B cell (primary cell): ENCODE measurements at regions of chr14 and their contacts with region 1.

Region 1: DNA sequence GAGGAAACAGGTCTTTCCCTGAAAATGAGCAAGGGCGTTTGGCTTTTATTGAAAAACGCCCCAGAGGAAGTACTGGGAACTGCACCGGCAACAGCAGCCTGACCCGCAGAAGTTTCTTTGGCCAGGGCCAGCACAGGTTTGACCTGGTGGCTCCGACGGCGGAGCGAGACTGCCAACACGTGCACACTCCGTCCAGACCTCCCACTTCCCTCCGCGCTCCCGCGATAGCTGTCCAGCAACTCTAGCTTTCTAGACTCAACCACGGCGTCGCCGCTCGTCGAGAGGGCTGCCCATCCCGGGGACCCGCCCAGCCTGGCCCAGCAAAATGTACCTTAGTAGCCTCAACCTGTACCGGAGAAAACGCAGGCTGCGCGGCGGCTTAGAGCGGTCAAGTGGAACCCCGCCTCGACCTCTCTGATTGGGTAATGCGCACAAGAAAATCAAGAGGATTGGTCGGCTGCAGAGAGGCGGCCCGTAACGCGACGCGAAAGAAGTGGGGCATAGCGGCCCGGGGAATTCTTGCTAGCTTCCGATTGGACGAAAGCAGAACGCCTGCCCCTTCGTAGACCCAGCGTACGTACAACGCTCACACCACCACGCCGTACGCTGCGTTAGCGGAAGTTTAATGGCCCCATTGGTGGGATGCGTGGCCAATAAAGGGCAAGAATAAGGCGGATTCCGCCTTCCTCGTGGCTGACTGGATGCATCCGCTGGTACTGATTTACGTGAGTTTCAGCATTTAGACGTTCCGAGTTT is at the start of gene WDR89:
- DNase-seq: peak; percentile 99
- ATAC-seq: peak; percentile 83
- H3K4me3 ChIP-seq: peak within 1 kb of the TSS; percentile 81 to 98 (median 86)
- H3K4me3 Mint-ChIP-seq: peak within 1 kb of the TSS; percentile 85
- H3K27ac ChIP-seq: peak within 1 kb of the TSS; percentile 97 to 99
- H3K27ac Mint-ChIP-seq: peak within 1 kb of the TSS; percentile 89
- H3K4me1 ChIP-seq: peaks cover 18% of the 10 kb centered on the region in 2 donors
- H3K4me1 Mint-ChIP-seq: peaks cover 34% of the 10 kb centered on the region
- H3K27me3 ChIP-seq: no peaks in the 10 kb centered on the region
- H3K27me3 Mint-ChIP-seq: no peaks in the 10 kb centered on the region
- CTCF ChIP-seq: peak; percentile 88
- total RNA-seq, gene WDR89: 19.0 and 21.8 TPM in 2 replicates

Region 2: DNA sequence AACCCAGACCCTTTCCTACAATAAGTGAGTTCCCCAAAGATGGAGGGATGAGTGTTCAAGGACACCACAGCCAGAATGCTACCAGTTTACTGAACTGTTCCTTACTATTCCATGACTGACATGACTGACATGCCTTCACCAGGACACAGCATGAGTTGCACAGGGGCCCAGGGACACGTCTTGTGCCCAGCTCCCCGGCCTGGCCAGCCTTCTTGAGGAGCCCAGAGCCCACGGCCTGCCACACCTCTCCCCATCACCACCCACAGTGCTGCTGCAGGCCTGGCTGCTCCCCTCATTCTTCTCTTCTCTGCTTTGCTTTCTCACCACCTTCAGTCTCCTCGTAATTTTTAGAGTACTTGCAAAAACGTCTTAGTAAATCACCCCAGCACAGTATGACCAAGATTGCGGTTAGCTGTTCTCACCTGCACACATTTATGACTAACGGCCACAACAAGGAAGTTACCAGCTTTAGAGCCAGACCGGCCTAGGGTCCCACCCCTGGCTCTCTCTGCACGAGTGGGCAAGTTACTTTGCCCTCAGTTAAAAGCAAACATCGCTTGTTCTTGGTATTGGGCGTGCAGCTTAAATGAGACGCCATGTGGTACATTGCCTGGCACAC is 117.0 kb before region 1 on chr14:
- CTCF ChIA-PET with region 1: no interaction called
- POLR2A ChIA-PET with region 1: no interaction called
- intact Hi-C with region 1: no loop called
- DNase-seq: peak; percentile 50
- ATAC-seq: peak; percentile 96
- H3K4me3 ChIP-seq: no peak overlapping the region
- H3K4me3 Mint-ChIP-seq: peak overlapping the region; percentile 28
- H3K27ac ChIP-seq: peak overlapping the region; percentile 37 to 59
- H3K27ac Mint-ChIP-seq: peak overlapping the region; percentile 62
- H3K4me1 ChIP-seq: peaks cover 5 to 14% of the 10 kb centered on the region in 2 donors
- H3K4me1 Mint-ChIP-seq: peaks cover 18% of the 10 kb centered on the region
- H3K27me3 ChIP-seq: no peaks in the 10 kb centered on the region
- H3K27me3 Mint-ChIP-seq: no peaks in the 10 kb centered on the region
- CTCF ChIP-seq: no peak

Region 3: GRCh38 chr14:63543000-63543825 is 98.4 kb before region 1 on chr14 and contains the start of gene PPP2R5E:
- CTCF ChIA-PET with region 1: no interaction called
- POLR2A ChIA-PET with region 1: interaction called, 12 read pairs
- intact Hi-C with region 1: loop called (anchors 1 kb)
- DNase-seq: peak; percentile 98
- ATAC-seq: peak; percentile 96
- H3K4me3 ChIP-seq: peak within 1 kb of the TSS; percentile 63 to 98 (median 94)
- H3K4me3 Mint-ChIP-seq: peak within 1 kb of the TSS; percentile 90
- H3K27ac ChIP-seq: peak within 1 kb of the TSS; percentile 82 to 90
- H3K27ac Mint-ChIP-seq: peak within 1 kb of the TSS; percentile 91
- H3K4me1 ChIP-seq: peaks cover 12 to 21% of the 10 kb centered on the region in 2 donors
- H3K4me1 Mint-ChIP-seq: peaks cover 28% of the 10 kb centered on the region
- H3K27me3 ChIP-seq: no peaks in the 10 kb centered on the region
- H3K27me3 Mint-ChIP-seq: no peaks in the 10 kb centered on the region
- CTCF ChIP-seq: no peak
- total RNA-seq, gene PPP2R5E: 40.3 and 40.6 TPM in 2 replicates

Region 4: GRCh38 chr14:63677821-63678380 is 36.2 kb after region 1 on chr14:
- CTCF ChIA-PET with region 1: no interaction called
- POLR2A ChIA-PET with region 1: no interaction called
- intact Hi-C with region 1: no loop called
- DNase-seq: no peak
- ATAC-seq: no peak
- H3K4me3 ChIP-seq: no peak overlapping the region
- H3K4me3 Mint-ChIP-seq: no peak overlapping the region
- H3K27ac ChIP-seq: no peak overlapping the region
- H3K27ac Mint-ChIP-seq: no peak overlapping the region
- H3K4me1 ChIP-seq: no peaks in the 10 kb centered on the region
- H3K4me1 Mint-ChIP-seq: no peaks in the 10 kb centered on the region
- H3K27me3 ChIP-seq: no peaks in the 10 kb centered on the region
- H3K27me3 Mint-ChIP-seq: no peaks in the 10 kb centered on the region
- CTCF ChIP-seq: no peak

Region 5: DNA sequence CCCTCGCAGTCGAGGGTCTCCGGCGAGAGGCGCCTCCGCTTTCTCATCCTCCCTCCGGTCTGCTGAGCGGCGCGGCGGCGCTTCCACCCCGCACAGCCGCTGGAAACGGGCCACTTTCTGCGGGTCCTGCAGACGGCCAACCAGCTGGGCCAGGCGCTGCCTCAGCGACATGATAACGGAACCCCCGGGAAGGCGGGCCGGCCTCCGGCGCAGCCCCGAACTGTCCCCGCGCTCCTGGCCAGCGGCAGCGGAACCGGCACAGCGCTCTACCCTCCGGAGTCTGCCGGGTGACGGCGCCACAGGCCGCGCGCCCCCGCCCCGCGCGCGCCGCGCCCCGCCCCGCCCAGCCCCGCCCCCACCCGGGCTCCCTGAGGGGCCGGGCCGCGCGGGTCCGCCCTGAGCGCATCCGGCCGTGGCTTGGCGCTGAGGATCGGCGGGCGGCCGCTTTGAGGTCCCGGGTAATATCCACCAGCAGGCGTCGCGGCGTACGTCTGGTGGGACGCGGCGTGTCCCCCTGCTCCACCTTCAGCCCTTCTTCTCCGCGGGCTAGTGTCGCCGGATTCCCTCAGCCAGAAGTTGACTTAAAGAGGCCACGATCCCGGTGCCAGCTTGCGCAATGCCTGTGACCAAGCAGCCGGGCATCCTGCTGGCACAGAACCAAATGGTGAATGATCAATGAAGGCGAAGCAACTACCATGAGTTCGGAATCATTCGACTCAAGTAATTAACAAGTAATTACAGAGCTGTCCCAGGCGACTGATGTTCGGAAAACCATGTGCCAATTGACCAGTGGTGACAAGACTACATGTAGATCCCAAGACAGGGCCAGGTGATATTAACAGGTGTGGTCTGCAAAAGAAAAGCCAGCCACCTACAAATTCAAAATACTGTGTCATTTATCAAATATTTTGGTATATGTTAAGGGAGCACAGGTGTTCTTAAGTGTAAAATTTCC is 86.4 kb after region 1 on chr14 and contains the start of gene SGPP1:
- CTCF ChIA-PET with region 1: interaction called, 6 read pairs
- POLR2A ChIA-PET with region 1: interaction called, 9 read pairs
- intact Hi-C with region 1: loop called (anchors 1 kb)
- DNase-seq: peak; percentile 92
- ATAC-seq: peak; percentile 92
- H3K4me3 ChIP-seq: peak within 1 kb of the TSS; percentile 79 to 95 (median 92)
- H3K4me3 Mint-ChIP-seq: peak within 1 kb of the TSS; percentile 100
- H3K27ac ChIP-seq: peak within 1 kb of the TSS; percentile 78 to 81
- H3K27ac Mint-ChIP-seq: peak within 1 kb of the TSS; percentile 97
- H3K4me1 ChIP-seq: peaks cover 20 to 29% of the 10 kb centered on the region in 2 donors
- H3K4me1 Mint-ChIP-seq: peaks cover 35% of the 10 kb centered on the region
- H3K27me3 ChIP-seq: no peaks in the 10 kb centered on the region
- H3K27me3 Mint-ChIP-seq: no peaks in the 10 kb centered on the region
- CTCF ChIP-seq: peak; percentile 49
- total RNA-seq, gene SGPP1: 44.3 and 46.4 TPM in 2 replicates

Region 6: DNA sequence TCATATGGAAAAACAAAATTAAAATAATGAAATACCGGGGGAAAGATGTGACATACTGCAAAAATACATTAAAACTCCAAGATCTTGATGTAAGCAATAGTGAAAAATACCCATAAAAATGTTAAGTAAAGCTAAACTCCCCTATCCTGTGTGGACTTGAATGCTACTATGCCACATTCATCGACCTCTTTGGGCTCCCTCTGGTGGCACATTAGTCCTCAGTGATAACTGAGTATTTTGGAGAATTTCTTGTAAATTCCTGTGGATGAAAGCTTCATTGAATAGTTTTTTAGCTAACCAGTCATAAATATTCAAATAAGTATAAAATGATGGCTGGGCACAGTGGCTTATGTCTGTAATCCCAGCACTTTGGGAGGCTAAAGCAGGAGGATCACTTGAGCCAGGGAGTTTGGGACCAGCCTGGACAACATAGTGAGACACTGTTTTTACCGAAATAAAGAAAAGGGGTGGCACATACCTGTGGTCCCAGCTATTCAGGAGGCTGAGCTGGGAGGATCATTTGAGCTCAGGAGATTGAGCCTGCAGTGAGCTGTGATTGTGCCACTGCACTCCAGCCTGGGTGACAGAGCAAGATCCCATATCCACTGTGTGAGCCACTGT is 128.6 kb after region 1 on chr14:
- CTCF ChIA-PET with region 1: interaction called, 84 read pairs
- POLR2A ChIA-PET with region 1: interaction called, 11 read pairs
- intact Hi-C with region 1: loop called (anchors 2 kb)
- DNase-seq: peak; percentile 76
- ATAC-seq: peak; percentile 87
- H3K4me3 ChIP-seq: no peak overlapping the region
- H3K4me3 Mint-ChIP-seq: peak overlapping the region; percentile 32
- H3K27ac ChIP-seq: no peak overlapping the region
- H3K27ac Mint-ChIP-seq: peak overlapping the region; percentile 5
- H3K4me1 ChIP-seq: peaks cover 10 to 22% of the 10 kb centered on the region in 2 donors
- H3K4me1 Mint-ChIP-seq: peaks cover 12% of the 10 kb centered on the region
- H3K27me3 ChIP-seq: no peaks in the 10 kb centered on the region
- H3K27me3 Mint-ChIP-seq: no peaks in the 10 kb centered on the region
- CTCF ChIP-seq: peak; percentile 82

Region 7: GRCh38 chr14:64232095-64232838 is 590.6 kb after region 1 on chr14:
- CTCF ChIA-PET with region 1: no interaction called
- POLR2A ChIA-PET with region 1: interaction called, 3 read pairs
- intact Hi-C with region 1: loop called (anchors 5 kb)
- DNase-seq: peak; percentile 31
- ATAC-seq: peak; percentile 7
- H3K4me3 ChIP-seq: no peak overlapping the region
- H3K4me3 Mint-ChIP-seq: peak overlapping the region; percentile 73
- H3K27ac ChIP-seq: no peak overlapping the region
- H3K27ac Mint-ChIP-seq: peak overlapping the region; percentile 96
- H3K4me1 ChIP-seq: peaks cover 49 to 53% of the 10 kb centered on the region in 2 donors
- H3K4me1 Mint-ChIP-seq: peaks cover 56% of the 10 kb centered on the region
- H3K27me3 ChIP-seq: no peaks in the 10 kb centered on the region
- H3K27me3 Mint-ChIP-seq: no peaks in the 10 kb centered on the region
- CTCF ChIP-seq: no peak

Region 8: DNA sequence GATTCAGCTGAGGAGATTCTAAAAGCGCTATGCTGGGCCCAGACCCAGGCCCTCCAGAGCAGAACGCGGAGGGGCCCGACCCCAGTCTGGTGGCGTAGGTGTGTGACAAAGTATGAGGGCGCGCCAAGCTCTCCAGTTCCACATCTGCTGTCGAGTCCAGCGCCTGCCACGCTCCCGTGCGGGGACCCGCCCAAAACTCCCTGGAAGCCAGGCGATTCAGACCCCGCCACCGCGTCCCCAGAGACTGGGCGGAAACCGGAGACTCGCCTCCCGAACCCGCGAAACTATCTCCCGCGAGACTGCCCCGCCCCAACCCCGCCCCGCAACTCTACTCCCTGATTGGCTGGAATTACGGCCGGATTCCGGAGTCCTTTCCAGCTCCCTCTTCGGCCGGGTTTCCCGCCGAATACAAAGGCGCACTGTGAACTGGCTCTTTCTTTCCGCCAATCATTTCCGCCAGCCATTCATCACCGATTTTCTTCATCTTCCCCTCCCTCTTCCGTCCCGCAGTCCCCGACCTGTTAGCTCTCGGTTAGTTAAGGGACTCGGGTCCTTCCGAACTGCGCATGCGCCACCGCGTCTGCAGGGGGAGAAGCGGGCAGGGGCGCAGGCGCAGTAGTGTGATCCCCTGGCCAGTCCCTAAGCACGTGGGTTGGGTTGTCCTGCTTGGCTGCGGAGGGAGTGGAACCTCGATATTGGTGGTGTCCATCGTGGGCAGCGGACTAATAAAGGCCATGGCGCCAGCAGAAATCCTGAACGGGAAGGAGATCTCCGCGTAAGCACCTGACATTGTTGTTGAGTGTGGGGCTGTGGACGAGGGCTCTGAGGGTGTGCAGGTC is 746.3 kb after region 1 on chr14 and contains the start of gene MTHFD1:
- CTCF ChIA-PET with region 1: no interaction called
- POLR2A ChIA-PET with region 1: no interaction called
- intact Hi-C with region 1: loop called (anchors 1 kb)
- DNase-seq: peak; percentile 98
- ATAC-seq: peak; percentile 75
- H3K4me3 ChIP-seq: peak within 1 kb of the TSS; percentile 68 to 93 (median 84)
- H3K4me3 Mint-ChIP-seq: peak within 1 kb of the TSS; percentile 93
- H3K27ac ChIP-seq: peak within 1 kb of the TSS; percentile 75 to 80
- H3K27ac Mint-ChIP-seq: peak within 1 kb of the TSS; percentile 95
- H3K4me1 ChIP-seq: peaks cover 27 to 34% of the 10 kb centered on the region in 2 donors
- H3K4me1 Mint-ChIP-seq: peaks cover 42% of the 10 kb centered on the region
- H3K27me3 ChIP-seq: no peaks in the 10 kb centered on the region
- H3K27me3 Mint-ChIP-seq: no peaks in the 10 kb centered on the region
- CTCF ChIP-seq: no peak
- total RNA-seq, gene MTHFD1: 47.1 and 51.3 TPM in 2 replicates

Region 9: GRCh38 chr14:65102441-65103149 is 1460.9 kb after region 1 on chr14 and contains the start of gene MAX:
- CTCF ChIA-PET with region 1: no interaction called
- POLR2A ChIA-PET with region 1: no interaction called
- intact Hi-C with region 1: loop called (anchors 5 kb)
- DNase-seq: peak; percentile 98
- ATAC-seq: peak; percentile 85
- H3K4me3 ChIP-seq: peak within 1 kb of the TSS; percentile 62 to 97 (median 93)
- H3K4me3 Mint-ChIP-seq: peak within 1 kb of the TSS; percentile 91
- H3K27ac ChIP-seq: peak within 1 kb of the TSS; percentile 95 to 97
- H3K27ac Mint-ChIP-seq: peak within 1 kb of the TSS; percentile 97
- H3K4me1 ChIP-seq: peaks cover 23 to 30% of the 10 kb centered on the region in 2 donors
- H3K4me1 Mint-ChIP-seq: peaks cover 38% of the 10 kb centered on the region
- H3K27me3 ChIP-seq: no peaks in the 10 kb centered on the region
- H3K27me3 Mint-ChIP-seq: no peaks in the 10 kb centered on the region
- CTCF ChIP-seq: no peak
- total RNA-seq, gene MAX: 127 and 130 TPM in 2 replicates